Aorta (tissue), 5 donors: ENCODE measurements at regions of chr16 and their contacts with region 1.

Region 1: GRCh38 chr16:2883027-2883851 is at the start of gene FLYWCH2:
- DNase-seq: peak; percentile 98 to 100
- ATAC-seq: peak; percentile 96
- H3K4me3 ChIP-seq: peak within 1 kb of the TSS; percentile 66 to 83
- H3K27ac ChIP-seq: peak within 1 kb of the TSS; percentile 8 to 72
- H3K4me1 ChIP-seq: no peaks in the 10 kb centered on the region
- H3K27me3 ChIP-seq: no peaks in the 10 kb centered on the region
- total RNA-seq, gene FLYWCH2: 11.5 to 14.6 TPM

Region 2: DNA sequence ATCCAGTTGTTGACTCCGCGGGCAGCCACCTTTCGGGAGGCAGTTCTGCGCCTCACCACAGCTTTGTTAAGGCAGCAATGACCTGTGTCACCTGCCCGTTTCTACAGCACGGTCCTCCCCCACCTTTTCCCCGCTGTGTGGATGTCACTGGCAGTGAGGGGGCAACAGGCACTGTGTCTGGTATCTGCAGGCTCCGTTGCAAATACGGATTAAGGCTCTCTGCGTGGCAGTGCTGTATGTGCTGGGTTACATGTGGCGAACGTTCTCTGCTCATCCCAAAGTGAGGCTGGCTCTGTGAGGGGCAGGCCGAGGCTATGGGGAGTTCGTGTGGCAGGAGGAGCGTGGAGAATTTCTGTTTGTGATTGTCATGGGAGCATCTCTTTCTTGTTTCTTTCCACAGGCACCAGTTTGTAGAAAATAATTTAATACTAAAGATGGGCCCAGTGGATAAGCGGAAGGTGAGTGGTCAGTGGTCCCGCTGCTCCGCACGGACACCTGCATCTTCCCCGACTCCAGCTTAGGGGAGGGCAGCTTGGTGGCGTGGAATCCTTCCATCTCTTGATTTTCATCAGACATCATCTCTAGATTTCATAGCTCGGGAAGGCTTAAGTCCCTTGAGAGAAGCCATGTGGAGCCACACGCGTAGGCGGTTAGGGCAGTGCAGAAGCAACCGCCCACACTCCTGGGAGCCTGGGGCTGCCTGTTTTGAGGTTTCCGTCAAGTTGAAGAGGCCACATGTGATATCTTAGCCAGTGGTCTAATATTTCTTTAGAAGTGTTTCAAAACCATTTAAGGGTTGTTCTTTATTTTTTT is 287.6 kb before region 1 on chr16:
- intact Hi-C with region 1: no loop called
- DNase-seq: peak; percentile 27 to 33
- ATAC-seq: no peak
- H3K4me3 ChIP-seq: no peak overlapping the region
- H3K27ac ChIP-seq: no peak overlapping the region
- H3K4me1 ChIP-seq: no peaks in the 10 kb centered on the region
- H3K27me3 ChIP-seq: no peaks in the 10 kb centered on the region

Region 3: DNA sequence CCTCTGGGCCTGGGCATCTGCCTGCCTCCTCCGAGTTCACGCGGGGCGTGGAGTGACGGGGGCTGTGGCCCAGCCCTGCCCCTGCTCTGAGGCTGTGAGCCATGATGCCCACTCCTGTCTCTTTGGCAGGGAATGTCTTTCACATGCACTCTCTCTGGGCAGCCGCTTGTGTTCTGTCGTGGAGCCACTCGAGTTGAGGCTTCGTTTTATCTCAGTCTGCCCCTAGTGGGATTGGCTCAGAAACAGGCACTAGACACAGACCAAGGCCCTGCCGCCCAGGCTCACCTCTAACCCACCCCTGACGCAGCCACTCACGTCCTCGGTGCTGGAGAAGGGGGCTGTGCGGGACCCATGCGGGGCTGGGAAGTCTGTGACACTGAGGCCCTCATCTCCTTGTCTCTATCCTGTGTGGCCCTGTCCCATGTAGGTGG is 268.5 kb before region 1 on chr16:
- intact Hi-C with region 1: no loop called
- DNase-seq: peak; percentile 11 to 67
- ATAC-seq: no peak
- H3K4me3 ChIP-seq: no peak overlapping the region
- H3K27ac ChIP-seq: no peak overlapping the region
- H3K4me1 ChIP-seq: no peaks in the 10 kb centered on the region
- H3K27me3 ChIP-seq: no peaks in the 10 kb centered on the region

Region 4: GRCh38 chr16:2905431-2906387 is 22.5 kb after region 1 on chr16:
- intact Hi-C with region 1: loop called in 1 of 2 experiments (anchors 1 kb)
- DNase-seq: peak; percentile 99 to 100
- ATAC-seq: peak; percentile 95
- H3K4me3 ChIP-seq: no peak overlapping the region
- H3K27ac ChIP-seq: no peak overlapping the region
- H3K4me1 ChIP-seq: no peaks in the 10 kb centered on the region
- H3K27me3 ChIP-seq: peaks cover 0 to 2% of the 10 kb centered on the region in 2 donors

Region 5: GRCh38 chr16:3173892-3174617 is 290.8 kb after region 1 on chr16:
- intact Hi-C with region 1: no loop called
- DNase-seq: peak in 1 of 2 donors; percentile 70
- ATAC-seq: no peak
- H3K4me3 ChIP-seq: no peak overlapping the region
- H3K27ac ChIP-seq: no peak overlapping the region
- H3K4me1 ChIP-seq: no peaks in the 10 kb centered on the region
- H3K27me3 ChIP-seq: peaks cover 0 to 1% of the 10 kb centered on the region in 2 donors